A673 (cell line): ENCODE measurements at regions of chr1 and their contacts with region 1.

Region 1: GRCh38 chr1:168431882-168432281 is 111.9 kb downstream of the XCL2 start:
- DNase-seq: no peak
- H3K4me3 ChIP-seq: no peak overlapping the region
- H3K27ac ChIP-seq: no peak overlapping the region
- H3K4me1 ChIP-seq: no peaks in the 10 kb centered on the region
- H3K27me3 ChIP-seq: no peaks in the 10 kb centered on the region
- CTCF ChIP-seq: no peak

Region 2: GRCh38 chr1:168373869-168374268 is 58.0 kb before region 1 on chr1:
- CTCF ChIA-PET with region 1: no interaction called
- POLR2A ChIA-PET with region 1: no interaction called
- intact Hi-C with region 1: no loop called
- DNase-seq: no peak
- H3K4me3 ChIP-seq: no peak overlapping the region
- H3K27ac ChIP-seq: no peak overlapping the region
- H3K4me1 ChIP-seq: no peaks in the 10 kb centered on the region
- H3K27me3 ChIP-seq: no peaks in the 10 kb centered on the region
- CTCF ChIP-seq: no peak

Region 3: GRCh38 chr1:168386949-168387586 is 44.8 kb before region 1 on chr1:
- CTCF ChIA-PET with region 1: no interaction called
- POLR2A ChIA-PET with region 1: no interaction called
- intact Hi-C with region 1: no loop called
- DNase-seq: no peak
- H3K4me3 ChIP-seq: no peak overlapping the region
- H3K27ac ChIP-seq: no peak overlapping the region
- H3K4me1 ChIP-seq: no peaks in the 10 kb centered on the region
- H3K27me3 ChIP-seq: no peaks in the 10 kb centered on the region
- CTCF ChIP-seq: no peak

Region 4: GRCh38 chr1:169042377-169042776 is 610.5 kb after region 1 on chr1:
- CTCF ChIA-PET with region 1: no interaction called
- POLR2A ChIA-PET with region 1: interaction called, 16 read pairs
- intact Hi-C with region 1: no loop called
- DNase-seq: no peak
- H3K4me3 ChIP-seq: no peak overlapping the region
- H3K27ac ChIP-seq: no peak overlapping the region
- H3K4me1 ChIP-seq: no peaks in the 10 kb centered on the region
- H3K27me3 ChIP-seq: no peaks in the 10 kb centered on the region
- CTCF ChIP-seq: no peak